Naive thymus-derived CD4-positive, alpha-beta T cell (primary cell): ENCODE measurements at regions of chr11 and their contacts with region 1.

Region 1: GRCh38 chr11:6757373-6757967 is 14.3 kb downstream of the OR2AG2 start:
- DNase-seq: peak in 8 of 9 donors; percentile 30 to 67 (median 56)
- ATAC-seq: peak; percentile 84
- H3K4me3 ChIP-seq: no peak overlapping the region
- H3K4me3 Mint-ChIP-seq: no peak overlapping the region
- H3K27ac ChIP-seq: no peak overlapping the region
- H3K27ac Mint-ChIP-seq: peak overlapping the region in 3 of 9 donors; percentile 22 to 34 (median 28)
- H3K4me1 ChIP-seq: no peaks in the 10 kb centered on the region
- H3K4me1 Mint-ChIP-seq: peaks cover 0 to 31% (median 10%) of the 10 kb centered on the region in 7 donors
- H3K27me3 ChIP-seq: peaks cover 0 to 7% of the 10 kb centered on the region in 2 donors
- H3K27me3 Mint-ChIP-seq: peaks cover 3 to 25% (median 5%) of the 10 kb centered on the region in 5 donors

Region 2: DNA sequence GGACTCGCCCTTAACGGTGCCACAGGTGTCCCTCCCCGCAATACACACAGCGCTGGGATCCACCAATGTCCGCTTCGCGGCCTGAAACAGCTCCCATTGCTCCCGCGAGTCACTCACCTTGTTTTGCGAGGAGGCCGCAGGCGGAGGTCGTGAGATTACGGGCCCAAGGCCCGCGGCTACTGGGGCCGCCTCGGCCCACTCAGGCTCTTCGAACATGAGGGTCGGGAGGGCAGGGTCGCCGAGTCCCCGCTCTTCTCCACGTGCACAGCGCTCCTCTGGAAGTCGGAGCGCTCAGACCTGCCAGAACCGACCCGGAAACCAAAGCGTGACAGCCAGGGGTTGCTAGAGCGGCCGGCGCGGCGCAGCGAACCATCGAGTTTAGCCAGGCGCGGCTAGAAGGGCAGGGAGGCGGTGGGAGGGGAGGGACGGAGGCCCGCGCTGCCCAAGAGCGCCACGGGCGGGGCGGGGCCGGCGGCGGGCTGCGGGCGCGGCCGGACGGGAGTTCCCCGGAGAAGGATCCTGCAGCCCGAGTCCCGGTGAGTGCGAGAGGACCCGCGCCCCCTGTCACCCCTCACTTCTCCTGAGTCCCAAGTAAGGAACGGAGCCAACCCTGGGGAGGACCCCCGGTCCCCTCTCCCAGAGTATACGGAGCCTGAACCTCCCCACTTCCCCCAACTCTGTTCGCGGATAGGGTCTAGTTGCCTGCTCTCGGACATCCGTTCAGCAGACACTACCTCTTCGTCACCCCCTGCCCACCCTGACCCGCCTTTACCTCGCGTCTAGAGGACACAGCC is 154.0 kb before region 1 on chr11 and contains the starts of genes ILK and RRP8:
- CTCF ChIA-PET with region 1: interaction called, 3 read pairs
- POLR2A ChIA-PET with region 1: no interaction called
- intact Hi-C with region 1: loop called in 1 of 2 experiments (anchors 1 kb)
- DNase-seq: peak; percentile 69 to 86 (median 78)
- ATAC-seq: peak; percentile 92
- H3K4me3 ChIP-seq: peak within 1 kb of the TSS; percentile 85
- H3K4me3 Mint-ChIP-seq: no peak within 1 kb of the TSS
- H3K27ac ChIP-seq: peak within 1 kb of the TSS; percentile 86
- H3K27ac Mint-ChIP-seq: no peak within 1 kb of the TSS
- H3K4me1 ChIP-seq: peaks cover 51% of the 10 kb centered on the region in 2 donors
- H3K4me1 Mint-ChIP-seq: peaks cover 9 to 33% (median 21%) of the 10 kb centered on the region in 7 donors
- H3K27me3 ChIP-seq: no peaks in the 10 kb centered on the region
- H3K27me3 Mint-ChIP-seq: no peaks in the 10 kb centered on the region
- total RNA-seq, gene ILK: 34.4 to 165 (median 89.6) TPM
- total RNA-seq, gene RRP8: 21.4 to 37.9 (median 27.9) TPM

Region 3: DNA sequence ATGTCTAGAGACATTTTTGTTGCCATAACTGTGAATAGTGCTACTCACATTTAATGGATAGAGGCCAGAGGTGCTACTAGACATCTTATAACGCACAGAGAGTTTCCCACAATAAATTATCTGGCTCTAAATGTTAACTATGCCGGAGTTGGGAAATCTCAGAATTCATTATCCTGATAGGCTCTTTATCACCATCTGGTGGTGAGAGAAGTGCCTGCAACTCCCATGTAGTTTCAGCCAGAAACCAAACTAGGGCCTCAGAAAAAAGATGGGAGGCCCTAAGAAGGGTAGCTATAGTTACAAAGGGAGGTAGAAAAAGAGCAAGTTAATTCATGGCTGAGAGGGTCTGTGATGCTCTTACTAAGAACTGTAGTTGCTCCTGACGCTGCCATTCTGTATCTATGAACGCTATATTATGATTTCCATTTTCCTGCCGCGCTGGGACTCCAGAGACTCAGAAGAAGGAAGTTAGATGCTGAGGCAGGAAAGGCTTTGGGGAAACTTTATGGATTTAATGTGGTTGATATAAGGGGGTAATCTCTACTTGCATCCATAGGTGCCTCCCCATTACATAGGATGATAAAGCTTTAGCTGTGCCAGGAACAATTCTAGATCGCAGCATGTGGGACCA is 51.5 kb before region 1 on chr11:
- CTCF ChIA-PET with region 1: interaction called, 48 read pairs
- POLR2A ChIA-PET with region 1: interaction called, 4 read pairs
- intact Hi-C with region 1: loop called (anchors 1 kb)
- DNase-seq: peak in 8 of 9 donors; percentile 20 to 49 (median 38)
- ATAC-seq: peak; percentile 79
- H3K4me3 ChIP-seq: no peak overlapping the region
- H3K4me3 Mint-ChIP-seq: no peak overlapping the region
- H3K27ac ChIP-seq: peak overlapping the region; percentile 28
- H3K27ac Mint-ChIP-seq: peak overlapping the region in 8 of 9 donors; percentile 36 to 87 (median 76)
- H3K4me1 ChIP-seq: no peaks in the 10 kb centered on the region
- H3K4me1 Mint-ChIP-seq: peaks cover 11 to 39% (median 17%) of the 10 kb centered on the region in 7 donors
- H3K27me3 ChIP-seq: no peaks in the 10 kb centered on the region
- H3K27me3 Mint-ChIP-seq: no peaks in the 10 kb centered on the region

Region 4: GRCh38 chr11:6737872-6738466 is 19.5 kb before region 1 on chr11:
- CTCF ChIA-PET with region 1: interaction called, 425 read pairs
- POLR2A ChIA-PET with region 1: interaction called, 76 read pairs
- intact Hi-C with region 1: loop called (anchors 1 kb)
- DNase-seq: peak in 8 of 9 donors; percentile 46 to 79 (median 72)
- ATAC-seq: peak; percentile 86
- H3K4me3 ChIP-seq: no peak overlapping the region
- H3K4me3 Mint-ChIP-seq: peak overlapping the region in 9 of 10 donors; percentile 4 to 90 (median 46)
- H3K27ac ChIP-seq: peak overlapping the region; percentile 61
- H3K27ac Mint-ChIP-seq: peak overlapping the region in 8 of 9 donors; percentile 34 to 92 (median 83)
- H3K4me1 ChIP-seq: peaks cover 70 to 73% of the 10 kb centered on the region in 2 donors
- H3K4me1 Mint-ChIP-seq: peaks cover 65 to 96% (median 86%) of the 10 kb centered on the region in 7 donors
- H3K27me3 ChIP-seq: no peaks in the 10 kb centered on the region
- H3K27me3 Mint-ChIP-seq: no peaks in the 10 kb centered on the region

Region 5: GRCh38 chr11:6790546-6790945 is 33.1 kb after region 1 on chr11:
- CTCF ChIA-PET with region 1: no interaction called
- POLR2A ChIA-PET with region 1: no interaction called
- intact Hi-C with region 1: no loop called
- DNase-seq: no peak
- ATAC-seq: no peak
- H3K4me3 ChIP-seq: no peak overlapping the region
- H3K4me3 Mint-ChIP-seq: no peak overlapping the region
- H3K27ac ChIP-seq: no peak overlapping the region
- H3K27ac Mint-ChIP-seq: no peak overlapping the region
- H3K4me1 ChIP-seq: no peaks in the 10 kb centered on the region
- H3K4me1 Mint-ChIP-seq: no peaks in the 10 kb centered on the region
- H3K27me3 ChIP-seq: no peaks in the 10 kb centered on the region
- H3K27me3 Mint-ChIP-seq: peaks cover 8 to 21% (median 17%) of the 10 kb centered on the region in 5 donors